ENCODE measurements at regions of chr4 and their contacts with region 1.

Region 1: DNA sequence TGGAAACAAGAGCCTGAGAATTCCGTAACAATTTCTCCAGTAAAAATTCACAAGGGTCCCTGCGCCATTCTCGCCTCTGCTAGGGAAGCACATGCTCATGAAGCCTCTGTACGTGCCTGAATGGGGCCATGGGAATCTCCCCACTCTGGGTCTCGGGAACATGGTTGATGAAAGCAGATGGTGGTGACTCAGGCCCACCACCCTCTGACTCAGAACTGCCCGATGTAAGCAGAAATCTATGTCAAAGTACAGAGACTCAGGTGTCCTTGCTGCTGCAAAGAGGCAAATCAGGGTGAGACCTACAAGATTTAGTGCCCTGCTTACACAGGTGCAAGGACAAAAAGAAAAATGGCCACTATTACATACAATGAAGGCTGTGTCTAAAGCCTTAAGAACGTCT is 65.0 kb downstream of the SCD5 start:
- DNase-seq: peak in 2 of 10 donors; percentile 34 to 72
- H3K4me3 ChIP-seq: no peak overlapping the region
- H3K27ac ChIP-seq: peak overlapping the region in 33 of 59 donors; percentile 1 to 92 (median 53)
- H3K27me3 ChIP-seq: no peaks in the 10 kb centered on the region
- CTCF ChIP-seq: no peak

Region 2: DNA sequence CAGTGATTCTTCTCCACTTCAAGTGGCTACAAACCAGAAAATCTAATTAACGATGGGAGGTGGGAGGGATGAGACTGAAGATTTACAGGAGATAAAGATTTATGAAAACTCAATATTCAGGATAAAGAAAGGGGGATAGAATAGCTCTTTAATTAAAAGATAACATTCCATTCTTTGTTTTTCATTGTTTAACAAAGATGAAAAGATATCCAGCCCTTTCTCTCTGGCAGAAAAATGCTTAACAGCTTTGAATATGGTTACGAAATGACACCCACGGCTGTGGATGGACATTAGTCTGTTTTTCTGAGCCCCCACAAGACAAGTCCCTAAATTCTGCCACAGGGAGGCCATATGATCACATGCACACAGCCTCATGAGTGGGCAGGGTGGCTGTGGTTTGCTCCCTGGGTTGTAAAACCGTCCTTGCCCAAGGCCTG is 208.2 kb before region 1 on chr4:
- intact Hi-C with region 1: loop called in 1 of 2 experiments (anchors 5 kb)
- DNase-seq: no peak
- H3K4me3 ChIP-seq: no peak overlapping the region
- H3K27ac ChIP-seq: peak overlapping the region in 38 of 59 donors; percentile 7 to 69 (median 39)
- H3K27me3 ChIP-seq: no peaks in the 10 kb centered on the region
- CTCF ChIP-seq: peak in 5 of 56 donors; percentile 6 to 17 (median 12)

Measured in dorsolateral prefrontal cortex (tissue), 120 donors.